Endothelial cell of umbilical vein (primary cell): ENCODE measurements at regions of chr21 and their contacts with region 1.

Region 1: DNA sequence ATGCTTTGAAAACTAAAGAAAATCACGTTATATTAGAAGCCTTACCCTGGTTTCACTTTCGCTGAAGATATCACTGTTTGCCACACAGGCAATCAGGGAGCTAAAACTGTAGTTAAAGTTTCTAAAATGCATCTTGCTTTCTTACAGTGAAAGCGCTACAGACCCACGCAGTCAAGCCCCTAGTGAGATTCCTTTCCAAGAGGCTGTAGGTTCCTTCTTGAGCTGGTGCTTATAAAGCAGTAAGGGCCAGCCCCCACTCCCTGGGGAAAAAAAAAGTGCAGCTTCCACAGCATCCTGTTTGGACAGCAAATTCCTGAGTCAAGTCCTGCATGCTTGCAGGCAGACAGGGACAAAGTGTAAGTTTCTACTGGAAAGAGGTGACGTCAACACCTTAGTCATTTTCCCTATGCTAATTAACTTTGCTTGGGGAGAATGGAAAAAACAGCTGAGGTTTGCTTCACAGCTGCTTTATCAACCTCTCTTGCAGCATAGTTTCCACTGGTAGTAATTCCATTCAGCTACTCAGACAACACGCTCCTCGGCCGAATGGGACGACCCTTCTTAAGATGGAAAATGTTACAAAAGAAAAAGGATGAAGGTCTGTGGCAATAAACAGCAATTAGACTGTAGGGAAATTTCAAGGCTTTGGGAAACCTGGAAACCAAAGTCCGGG is 14.7 kb upstream of the KCNE1 start:
- DNase-seq: peak; percentile 99
- H3K4me3 ChIP-seq: peak overlapping the region; percentile 41 to 93 (median 76)
- H3K27ac ChIP-seq: peak overlapping the region; percentile 98
- H3K4me1 ChIP-seq: peaks cover 23% of the 10 kb centered on the region
- H3K27me3 ChIP-seq: no peaks in the 10 kb centered on the region
- CTCF ChIP-seq: no peak
- POLR2A ChIP-seq: peak; percentile 97

Region 2: DNA sequence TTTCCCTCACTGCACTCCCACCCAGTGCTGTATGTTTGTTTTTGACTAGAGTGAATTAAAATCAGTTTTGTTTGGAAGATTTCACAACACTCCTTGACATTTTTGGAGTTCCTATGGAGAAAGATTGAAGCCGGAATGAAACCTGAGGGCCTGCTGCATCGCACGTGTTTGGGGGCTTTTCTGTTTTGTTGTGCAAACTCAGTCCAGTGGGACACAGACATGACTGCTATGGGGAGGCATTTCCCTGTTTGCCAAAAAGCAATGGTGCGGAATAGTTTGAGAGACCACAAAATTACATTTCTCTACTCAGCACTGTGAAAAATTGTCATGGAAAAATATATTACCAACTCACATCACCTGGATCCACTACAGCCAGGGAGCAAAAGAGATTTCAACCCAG is 206.7 kb before region 1 on chr21:
- CTCF ChIA-PET with region 1: no interaction called
- POLR2A ChIA-PET with region 1: no interaction called
- dilution Hi-C with region 1: no loop called
- intact Hi-C with region 1: no loop called
- DNase-seq: no peak
- H3K4me3 ChIP-seq: no peak overlapping the region
- H3K27ac ChIP-seq: no peak overlapping the region
- H3K4me1 ChIP-seq: no peaks in the 10 kb centered on the region
- H3K27me3 ChIP-seq: peaks cover 13 to 30% of the 10 kb centered on the region in 2 experiments
- CTCF ChIP-seq: no peak
- POLR2A ChIP-seq: no peak

Region 3: DNA sequence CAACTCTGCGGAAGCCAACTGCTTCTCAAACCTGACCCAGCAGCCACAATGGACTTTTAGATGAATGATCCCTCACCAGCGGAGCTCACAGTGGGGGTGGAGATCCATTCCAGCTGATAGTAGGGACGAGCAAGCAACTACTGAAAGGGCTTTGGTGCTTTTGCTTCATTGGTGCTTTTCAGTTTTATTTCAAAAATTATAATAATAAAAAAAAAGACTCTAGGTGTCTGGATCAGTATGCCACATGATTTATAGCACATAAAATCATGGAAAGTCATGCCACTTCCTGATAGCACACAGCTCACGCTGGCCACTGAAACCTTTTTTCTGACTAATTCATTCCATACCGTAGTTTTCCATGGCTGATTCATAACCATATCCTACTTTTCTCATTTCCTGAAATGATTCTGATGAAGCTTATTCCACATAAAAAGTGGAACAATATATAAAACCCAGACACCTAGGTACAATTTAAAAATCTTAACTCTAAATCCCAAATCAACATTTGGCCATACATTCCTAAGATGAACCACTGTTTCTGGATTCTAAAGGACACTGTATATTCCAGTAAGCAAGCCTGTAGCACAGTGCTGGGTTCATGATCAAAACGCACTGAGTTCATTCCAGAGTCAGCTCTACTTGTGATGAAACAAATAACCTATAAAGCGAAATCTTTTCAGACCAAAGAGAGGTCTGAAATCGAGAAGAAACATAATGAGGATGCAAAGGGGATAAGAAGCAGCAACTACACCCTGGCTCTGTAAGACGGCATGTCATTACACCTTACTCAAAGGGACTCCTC is 26.6 kb after region 1 on chr21:
- CTCF ChIA-PET with region 1: interaction called, 10 read pairs
- POLR2A ChIA-PET with region 1: interaction called, 9 read pairs
- dilution Hi-C with region 1: no loop called
- intact Hi-C with region 1: loop called (anchors 1 kb)
- DNase-seq: peak; percentile 96
- H3K4me3 ChIP-seq: peak overlapping the region in 1 of 3 experiments; percentile 9
- H3K27ac ChIP-seq: peak overlapping the region; percentile 81
- H3K4me1 ChIP-seq: peaks cover 21% of the 10 kb centered on the region
- H3K27me3 ChIP-seq: no peaks in the 10 kb centered on the region
- CTCF ChIP-seq: no peak
- POLR2A ChIP-seq: no peak